ENCODE measurements at regions of chr2 and their contacts with region 1.

Region 1: DNA sequence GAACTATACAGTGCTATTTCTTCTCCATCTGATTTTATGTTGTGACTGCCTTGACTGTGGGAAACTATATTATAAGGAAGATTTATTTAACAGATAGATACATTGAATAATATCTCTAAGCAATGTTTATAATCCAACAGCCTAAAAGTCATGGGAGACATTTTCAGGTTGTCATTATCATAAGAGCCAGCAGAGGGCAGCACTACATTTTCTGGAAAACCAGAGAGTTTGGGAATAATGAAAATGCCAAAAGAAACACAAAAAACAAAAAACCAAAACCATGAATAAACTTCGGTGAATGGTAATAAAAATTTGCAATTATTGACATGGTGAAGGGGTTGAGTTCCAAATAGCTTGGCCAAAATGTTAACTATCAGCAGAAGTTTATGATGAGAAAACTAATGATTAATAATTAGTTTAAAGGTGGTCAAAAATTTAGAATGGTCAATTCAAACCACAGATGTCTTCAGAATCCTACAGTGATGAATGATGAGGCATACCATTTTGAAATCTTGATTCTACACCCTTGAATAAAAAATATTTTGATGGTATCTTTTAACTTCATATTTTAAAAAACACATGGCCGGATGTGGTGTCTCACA is 4.7 kb downstream of the EEF1B2 start:
- DNase-seq: peak in 1 of 2 experiments; percentile 42
- ATAC-seq: no peak
- H3K4me3 ChIP-seq: no peak overlapping the region
- H3K27ac ChIP-seq: no peak overlapping the region
- H3K4me1 ChIP-seq: peaks cover 25% of the 10 kb centered on the region
- CTCF ChIP-seq: peak; percentile 85
- EP300 ChIP-seq: no peak
- POLR2A ChIP-seq: no peak
- RAD21 ChIP-seq: peak; percentile 62 to 65

Region 2: GRCh38 chr2:206176121-206176520 is 11.8 kb after region 1 on chr2:
- CTCF ChIA-PET with region 1: interaction called, 16 read pairs
- POLR2A ChIA-PET with region 1: no interaction called
- DNase-seq: no peak
- ATAC-seq: no peak
- H3K4me3 ChIP-seq: no peak overlapping the region
- H3K27ac ChIP-seq: no peak overlapping the region
- H3K4me1 ChIP-seq: no peaks in the 10 kb centered on the region
- CTCF ChIP-seq: no peak
- EP300 ChIP-seq: no peak
- POLR2A ChIP-seq: no peak
- RAD21 ChIP-seq: no peak